ENCODE measurements at regions of chr6 and their contacts with region 1.

Region 1: DNA sequence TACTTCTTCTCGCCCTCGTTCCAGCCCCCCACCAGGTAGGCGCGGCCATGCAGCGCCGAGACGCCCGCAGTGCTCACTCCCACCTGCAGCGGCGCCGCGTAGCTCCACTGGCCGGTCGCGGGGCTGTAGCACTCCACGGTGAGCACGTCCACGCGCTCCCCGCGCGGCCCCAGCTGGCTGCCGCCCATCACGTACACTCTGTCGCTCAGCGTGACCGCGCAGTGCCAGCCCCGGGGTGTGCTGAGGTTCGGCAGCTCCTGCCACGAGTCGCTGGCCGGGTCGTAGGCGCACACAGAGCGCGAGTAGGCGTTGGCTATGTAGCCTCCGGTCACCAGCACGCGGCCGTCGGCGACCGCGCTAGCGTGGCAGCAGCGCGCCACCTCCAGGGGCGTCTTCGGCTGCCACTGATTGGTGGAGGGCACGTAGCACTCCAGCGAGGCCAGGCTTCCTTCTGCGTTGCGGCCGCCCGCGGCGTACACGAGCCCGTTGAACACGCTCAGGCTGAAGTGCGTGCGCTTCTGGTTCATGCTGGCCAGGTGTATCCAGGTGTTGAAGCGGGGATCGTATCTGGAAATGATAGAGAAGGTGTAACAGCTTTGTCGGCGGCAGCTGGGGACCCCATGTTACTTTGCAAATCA is 13.7 kb downstream of the KLHL31 start:
- DNase-seq: peak; percentile 44 to 88
- ATAC-seq: peak; percentile 98
- H3K4me3 ChIP-seq: peak overlapping the region; percentile 58
- H3K27ac ChIP-seq: peak overlapping the region; percentile 85 to 99
- H3K4me1 ChIP-seq: peaks cover 34% of the 10 kb centered on the region
- CTCF ChIP-seq: peak; percentile 44
- EP300 ChIP-seq: no peak
- POLR2A ChIP-seq: peak; percentile 64
- RAD21 ChIP-seq: peak; percentile 36 to 52; a peak in 3 of 5 replicates

Region 2: DNA sequence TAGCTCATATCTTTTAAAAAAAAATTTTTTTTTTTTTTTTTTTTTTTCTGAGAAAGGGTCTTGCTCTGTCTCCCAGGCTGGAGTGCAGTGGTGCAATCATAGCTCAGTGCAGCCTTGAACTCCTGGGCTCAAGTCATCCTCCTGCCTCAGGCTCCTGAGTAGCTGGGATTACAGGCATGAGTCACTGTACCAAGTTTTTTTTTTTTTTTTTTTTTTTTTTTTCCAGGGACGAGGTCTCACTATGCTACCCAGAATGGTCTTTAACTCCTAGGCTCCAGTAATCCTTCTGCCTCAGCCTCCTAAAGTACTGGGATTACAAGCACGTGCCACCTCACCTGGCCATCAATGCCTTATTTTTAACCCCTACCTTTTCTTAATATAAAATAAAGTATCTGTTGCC is 134.8 kb before region 1 on chr6:
- CTCF ChIA-PET with region 1: interaction called, 17 read pairs
- POLR2A ChIA-PET with region 1: interaction called, 3 read pairs
- DNase-seq: peak in 1 of 2 experiments; percentile 48
- ATAC-seq: peak in 1 of 2 experiments; percentile 70; a peak in 4 of 6 replicates
- H3K4me3 ChIP-seq: no peak overlapping the region
- H3K27ac ChIP-seq: peak overlapping the region; percentile 7 to 70; a peak in 4 of 6 replicates
- H3K4me1 ChIP-seq: peaks cover 73% of the 10 kb centered on the region
- CTCF ChIP-seq: no peak
- EP300 ChIP-seq: no peak
- POLR2A ChIP-seq: no peak
- RAD21 ChIP-seq: no peak

Region 3: DNA sequence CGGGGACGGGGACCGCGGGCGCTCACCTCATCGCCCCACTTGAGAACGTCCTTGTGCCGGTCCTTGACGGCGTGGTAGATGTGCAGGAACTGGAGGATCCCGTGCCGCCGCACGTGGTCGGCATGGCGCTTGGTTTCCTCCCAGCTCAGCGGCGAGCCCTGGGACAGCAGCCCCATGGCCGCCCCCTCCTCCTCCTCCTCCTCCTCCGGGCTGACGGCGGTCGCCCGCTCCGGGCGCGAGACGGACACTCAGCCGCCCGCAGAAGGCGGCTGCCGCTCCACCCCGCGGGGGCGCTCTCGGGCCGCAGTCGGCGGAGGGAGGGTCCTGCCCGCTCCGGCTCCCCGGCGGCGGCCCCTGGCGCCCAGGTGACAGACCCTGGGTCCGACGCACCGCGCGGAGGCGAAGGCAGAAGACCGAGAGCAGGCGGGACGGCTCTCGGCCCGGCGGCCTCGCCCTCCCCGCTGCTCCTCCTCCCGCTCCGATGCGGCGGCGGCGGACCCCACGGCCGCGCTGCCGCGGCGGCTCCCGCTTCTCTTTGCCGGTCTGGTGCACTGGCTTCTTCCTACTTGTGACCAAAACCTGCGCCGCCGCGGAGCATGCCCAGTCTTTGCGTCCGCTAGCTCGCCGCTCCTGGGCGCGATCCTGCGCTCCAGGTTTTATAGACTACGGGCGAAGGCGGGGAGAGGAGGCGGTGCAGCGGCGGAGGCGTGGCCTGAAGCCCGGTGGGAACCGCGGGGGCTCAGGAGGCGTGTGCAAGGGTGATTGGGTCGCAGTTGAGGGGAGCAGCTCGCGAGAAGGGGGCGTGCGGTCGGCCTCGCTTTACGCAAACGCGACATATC is 107.2 kb before region 1 on chr6 and contains the start of gene GCLC:
- CTCF ChIA-PET with region 1: interaction called, 25 read pairs
- POLR2A ChIA-PET with region 1: interaction called, 18 read pairs
- DNase-seq: peak; percentile 78 to 94
- ATAC-seq: peak; percentile 64 to 72
- H3K4me3 ChIP-seq: peak within 1 kb of the TSS; percentile 90
- H3K27ac ChIP-seq: peak within 1 kb of the TSS; percentile 95 to 98
- H3K4me1 ChIP-seq: peaks cover 40% of the 10 kb centered on the region
- CTCF ChIP-seq: peak; percentile 78
- EP300 ChIP-seq: peak in 1 of 2 experiments; percentile 28; a peak in 1 of 5 replicates
- POLR2A ChIP-seq: peak; percentile 95
- RAD21 ChIP-seq: peak; percentile 31 to 79; a peak in 4 of 5 replicates
- polyA plus RNA-seq, gene GCLC: 180 and 187 TPM in 2 replicates

Region 4: GRCh38 chr6:53641348-53641747 is 10.5 kb before region 1 on chr6:
- CTCF ChIA-PET with region 1: interaction called, 10 read pairs
- POLR2A ChIA-PET with region 1: no interaction called
- DNase-seq: no peak
- ATAC-seq: no peak
- H3K4me3 ChIP-seq: no peak overlapping the region
- H3K27ac ChIP-seq: peak overlapping the region in 1 of 2 experiments; percentile 30; a peak in 1 of 6 replicates
- H3K4me1 ChIP-seq: peaks cover 19% of the 10 kb centered on the region
- CTCF ChIP-seq: no peak
- EP300 ChIP-seq: no peak
- POLR2A ChIP-seq: no peak
- RAD21 ChIP-seq: no peak

Region 5: DNA sequence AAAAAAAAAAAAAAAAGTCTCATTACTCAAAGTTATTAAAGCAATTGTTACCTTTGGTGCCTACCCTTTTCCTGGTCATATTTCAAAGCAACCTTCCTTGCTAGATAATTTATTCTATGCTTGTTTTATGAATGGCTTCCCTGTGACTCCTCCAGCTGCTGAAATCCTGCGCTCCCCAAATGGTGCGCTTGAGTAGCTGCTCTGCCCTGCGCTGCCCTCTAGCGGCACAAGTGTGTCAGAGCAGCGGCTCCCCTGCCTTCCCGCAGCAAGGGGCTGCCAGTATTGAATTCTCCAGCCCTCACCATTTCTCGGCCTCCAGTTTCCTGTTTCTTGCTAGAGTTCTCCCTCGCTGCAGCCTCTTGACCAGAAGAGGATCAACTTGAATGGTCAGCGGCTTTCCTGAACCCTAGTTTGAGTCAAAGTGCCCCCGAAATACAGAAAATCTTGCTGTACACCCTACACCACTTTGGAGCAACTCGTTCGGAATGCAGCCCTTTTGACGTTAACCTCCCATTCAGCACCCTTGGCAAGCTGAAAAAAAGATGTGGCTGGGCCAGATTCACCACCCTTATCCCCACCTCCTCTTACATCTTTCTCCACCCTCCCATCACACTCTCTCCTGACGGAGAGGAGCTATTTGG is 74.0 kb after region 1 on chr6:
- CTCF ChIA-PET with region 1: interaction called, 15 read pairs
- POLR2A ChIA-PET with region 1: no interaction called
- DNase-seq: peak; percentile 66 to 74
- ATAC-seq: peak; percentile 94 to 95
- H3K4me3 ChIP-seq: peak overlapping the region; percentile 40
- H3K27ac ChIP-seq: peak overlapping the region; percentile 31 to 52; a peak in 4 of 6 replicates
- H3K4me1 ChIP-seq: peaks cover 13% of the 10 kb centered on the region; the same call in 2 of the 3 replicates
- CTCF ChIP-seq: peak; percentile 78
- EP300 ChIP-seq: no peak
- POLR2A ChIP-seq: no peak
- RAD21 ChIP-seq: peak; percentile 77 to 80

Measured in A549 (cell line).